ENCODE measurements at regions of chr7 and their contacts with region 1.

Region 1: GRCh38 chr7:47979145-47979831 is at the start of gene HUS1:
- DNase-seq: peak; percentile 81 to 86
- H3K4me3 ChIP-seq: peak within 1 kb of the TSS; percentile 89
- H3K27ac ChIP-seq: peak within 1 kb of the TSS; percentile 71
- H3K4me1 ChIP-seq: peaks cover 11% of the 10 kb centered on the region
- H3K27me3 ChIP-seq: no peaks in the 10 kb centered on the region
- CTCF ChIP-seq: no peak
- total RNA-seq, gene HUS1: 28.4 and 43.5 TPM in 2 replicates

Region 2: GRCh38 chr7:48058990-48059389 is 79.7 kb after region 1 on chr7:
- CTCF ChIA-PET with region 1: interaction called, 11 read pairs
- POLR2A ChIA-PET with region 1: no interaction called
- intact Hi-C with region 1: no loop called
- DNase-seq: no peak
- H3K4me3 ChIP-seq: no peak overlapping the region
- H3K27ac ChIP-seq: no peak overlapping the region
- H3K4me1 ChIP-seq: no peaks in the 10 kb centered on the region
- H3K27me3 ChIP-seq: no peaks in the 10 kb centered on the region
- CTCF ChIP-seq: no peak

Region 3: DNA sequence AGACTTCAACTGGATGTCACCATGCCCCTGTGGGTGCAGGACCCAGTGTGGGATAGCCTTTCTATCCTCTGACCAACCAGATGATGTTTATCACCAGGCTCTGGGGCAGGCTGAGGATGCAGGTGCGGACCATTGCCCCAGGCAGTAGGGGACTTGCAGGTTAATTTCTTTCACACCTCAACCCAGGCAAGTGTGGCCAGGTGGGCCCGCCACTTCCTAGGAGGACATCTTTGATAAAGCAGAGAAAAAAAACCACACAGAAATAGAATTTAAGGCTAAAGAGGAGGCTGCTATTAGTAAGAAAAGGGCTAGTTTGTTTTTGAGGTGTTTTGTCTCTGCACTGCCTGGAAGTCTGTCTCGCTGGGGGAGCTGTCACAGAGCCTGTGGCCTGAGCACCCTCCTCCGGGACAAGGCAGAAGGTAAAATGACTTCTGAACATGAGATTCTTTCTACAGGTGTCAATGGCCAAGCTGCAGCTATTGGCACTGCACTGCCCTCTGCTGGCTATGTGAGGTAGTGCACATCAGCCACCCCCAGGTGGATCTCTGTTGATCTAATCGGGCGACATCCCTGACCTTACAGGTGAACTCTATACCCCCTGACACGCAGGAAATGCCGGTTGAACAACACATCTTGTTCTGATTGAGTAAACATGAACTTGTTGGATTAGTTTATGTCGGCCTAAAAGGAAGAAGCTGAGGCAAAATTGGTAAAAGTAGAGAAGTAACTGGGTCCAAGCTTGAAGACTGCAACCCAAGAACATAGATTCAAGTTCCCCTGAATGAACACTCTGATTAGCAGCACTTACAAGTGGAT is 130.8 kb after region 1 on chr7:
- CTCF ChIA-PET with region 1: no interaction called
- POLR2A ChIA-PET with region 1: no interaction called
- intact Hi-C with region 1: loop called (anchors 1 kb)
- DNase-seq: peak; percentile 95 to 96
- H3K4me3 ChIP-seq: peak overlapping the region; percentile 6; the same call in 1 of the 2 replicates
- H3K27ac ChIP-seq: peak overlapping the region; percentile 9
- H3K4me1 ChIP-seq: peaks cover 40% of the 10 kb centered on the region
- H3K27me3 ChIP-seq: no peaks in the 10 kb centered on the region
- CTCF ChIP-seq: peak; percentile 100

Region 4: DNA sequence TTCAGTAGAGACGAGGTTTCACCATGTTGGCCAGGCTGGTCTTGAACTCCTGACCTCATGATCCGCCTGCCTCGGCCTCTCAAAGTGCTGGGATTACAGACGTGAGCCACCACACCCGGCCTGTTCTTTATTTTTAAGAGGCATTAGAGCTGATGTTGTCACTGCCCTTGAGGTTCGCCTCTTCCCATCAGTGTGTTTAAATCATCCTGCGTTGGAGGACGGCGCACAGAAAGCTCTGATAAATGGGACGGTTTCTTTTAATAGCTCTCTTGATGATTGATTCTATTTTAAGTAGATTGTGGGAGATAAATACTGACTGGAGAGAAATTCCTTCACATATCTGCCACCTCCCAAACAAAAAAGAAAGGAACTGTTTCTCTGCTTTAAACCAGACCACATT is 138.8 kb after region 1 on chr7:
- CTCF ChIA-PET with region 1: no interaction called
- POLR2A ChIA-PET with region 1: interaction called, 11 read pairs
- intact Hi-C with region 1: no loop called
- DNase-seq: no peak
- H3K4me3 ChIP-seq: no peak overlapping the region
- H3K27ac ChIP-seq: no peak overlapping the region
- H3K4me1 ChIP-seq: 0 out of 2 replicates have a peak, but pooled peaks cover 7% of the 10 kb centered on the region
- H3K27me3 ChIP-seq: no peaks in the 10 kb centered on the region
- CTCF ChIP-seq: no peak